Dendritic cell treated with granulocyte-macrophage colony-stimulating factor and Interleukin-4, amounts not matched to agents 40 ng/mL and 50 ng/mL, for 4 days (primary cell): ENCODE measurements at regions of chr1 and their contacts with region 1.

Region 1: GRCh38 chr1:38873027-38873969 is at the start of gene MYCBP:
- H3K4me3 Mint-ChIP-seq: peak within 1 kb of the TSS; percentile 91
- H3K27ac Mint-ChIP-seq: peak within 1 kb of the TSS; percentile 82
- H3K4me1 Mint-ChIP-seq: peaks cover 16% of the 10 kb centered on the region
- H3K27me3 Mint-ChIP-seq: no peaks in the 10 kb centered on the region

Region 2: DNA sequence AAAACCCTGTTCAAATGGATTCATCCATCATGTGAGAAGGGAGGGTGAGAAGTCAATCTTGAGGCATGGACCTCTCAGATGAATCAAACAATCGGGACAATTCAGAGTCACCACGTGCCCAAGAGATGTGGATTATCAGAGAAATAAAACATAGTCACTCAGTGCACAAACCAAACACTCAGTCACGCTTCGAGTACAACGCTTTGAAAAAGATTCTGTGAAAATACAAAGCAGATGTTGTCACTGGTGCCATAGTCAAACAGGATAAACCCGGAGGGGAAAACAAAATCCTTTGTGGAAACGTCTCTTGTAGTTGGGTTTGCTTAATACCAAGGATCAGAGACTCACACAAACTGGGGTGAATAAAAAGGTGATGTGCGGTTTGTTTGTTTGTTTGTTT is 202.1 kb before region 1 on chr1:
- intact Hi-C with region 1: no loop called
- H3K4me3 Mint-ChIP-seq: no peak overlapping the region
- H3K27ac Mint-ChIP-seq: no peak overlapping the region
- H3K4me1 Mint-ChIP-seq: no peaks in the 10 kb centered on the region
- H3K27me3 Mint-ChIP-seq: peaks cover 5% of the 10 kb centered on the region

Region 3: GRCh38 chr1:38859561-38860453 is 13.5 kb before region 1 on chr1 and contains the start of gene RRAGC:
- intact Hi-C with region 1: loop called (anchors 1 kb)
- H3K4me3 Mint-ChIP-seq: peak within 1 kb of the TSS; percentile 94
- H3K27ac Mint-ChIP-seq: peak within 1 kb of the TSS; percentile 87
- H3K4me1 Mint-ChIP-seq: peaks cover 57% of the 10 kb centered on the region
- H3K27me3 Mint-ChIP-seq: no peaks in the 10 kb centered on the region

Region 4: DNA sequence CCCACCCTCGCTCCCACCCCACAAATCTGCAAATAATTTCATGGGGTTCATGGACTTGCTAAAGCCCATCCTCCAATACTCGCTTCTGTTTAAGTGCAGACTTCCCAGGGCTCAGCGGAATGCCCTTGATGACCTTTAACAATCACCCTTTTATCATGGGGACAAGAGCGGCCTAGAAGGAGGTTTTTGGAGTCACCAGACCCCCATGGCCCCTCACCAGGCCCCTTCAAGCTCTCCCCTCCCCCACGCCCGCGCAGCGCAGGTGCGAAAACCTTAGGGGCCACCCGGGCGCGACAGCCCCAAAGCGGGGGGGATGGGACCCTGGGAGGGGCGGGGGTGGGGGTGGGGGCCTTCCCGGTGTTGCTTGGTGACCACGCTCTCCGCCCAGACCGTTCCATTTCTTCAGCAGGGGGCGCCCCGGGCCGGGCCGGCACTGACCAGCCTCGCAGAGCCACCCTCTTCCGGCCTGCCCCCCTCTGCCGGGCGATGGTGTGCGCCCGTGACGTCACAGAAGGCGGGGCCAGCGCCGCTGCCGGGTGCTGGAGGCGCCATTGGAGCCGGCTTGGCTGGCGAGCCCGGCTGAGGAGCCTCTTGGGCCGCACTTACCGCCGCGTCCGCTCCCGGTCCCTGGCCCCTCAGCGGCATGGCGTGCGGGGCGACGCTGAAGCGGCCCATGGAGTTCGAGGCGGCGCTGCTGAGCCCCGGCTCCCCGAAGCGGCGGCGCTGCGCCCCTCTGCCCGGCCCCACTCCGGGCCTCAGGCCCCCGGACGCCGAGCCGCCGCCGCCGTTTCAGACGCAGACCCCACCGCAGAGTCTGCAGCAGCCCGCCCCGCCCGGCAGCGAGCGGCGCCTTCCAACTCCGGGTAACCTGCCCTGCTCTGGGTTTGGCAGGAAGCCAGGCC is 117.7 kb after region 1 on chr1 and contains the start of gene AKIRIN1:
- intact Hi-C with region 1: loop called (anchors 1 kb)
- H3K4me3 Mint-ChIP-seq: peak within 1 kb of the TSS; percentile 80
- H3K27ac Mint-ChIP-seq: peak within 1 kb of the TSS; percentile 85
- H3K4me1 Mint-ChIP-seq: peaks cover 36% of the 10 kb centered on the region
- H3K27me3 Mint-ChIP-seq: no peaks in the 10 kb centered on the region

Region 5: DNA sequence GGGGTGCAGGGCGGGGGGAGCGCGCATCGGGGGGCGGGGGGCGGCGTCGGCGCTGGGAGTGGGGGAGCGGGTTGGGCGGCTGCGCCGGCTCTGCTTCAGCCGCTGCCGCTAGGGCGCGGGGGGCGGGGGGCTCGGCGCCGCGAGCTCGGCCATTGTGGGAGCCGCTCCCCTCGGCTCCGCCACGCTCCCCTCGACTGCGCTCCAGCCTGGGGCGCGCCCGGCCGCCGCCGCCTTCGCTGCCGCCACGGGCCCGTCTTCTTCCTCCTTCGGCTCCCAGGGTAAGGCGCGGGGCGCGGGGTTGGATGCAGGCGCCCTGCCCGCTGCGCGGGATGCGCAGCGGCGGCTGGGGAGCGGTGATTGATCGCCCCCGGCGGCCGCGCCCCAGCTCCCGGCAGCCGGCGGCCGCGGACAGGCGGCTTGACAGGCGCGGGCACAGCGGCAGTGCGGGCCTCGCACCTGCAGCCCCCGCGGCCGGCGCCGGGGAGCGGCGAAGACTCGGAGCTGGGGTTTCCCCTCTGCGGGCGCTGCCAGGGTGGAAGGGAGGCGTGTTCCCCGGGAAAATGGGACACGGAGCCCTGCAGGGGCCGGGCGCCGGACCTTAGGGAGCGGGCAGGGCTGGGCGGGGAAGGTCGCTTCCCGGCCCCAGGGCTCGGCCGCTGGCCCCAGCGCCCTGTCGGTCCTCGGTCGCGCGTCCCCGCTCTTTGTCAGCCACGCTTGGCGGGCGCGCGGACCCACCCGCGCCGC is 208.1 kb after region 1 on chr1:
- intact Hi-C with region 1: loop called (anchors 10 kb)
- H3K4me3 Mint-ChIP-seq: peak overlapping the region; percentile 35
- H3K27ac Mint-ChIP-seq: no peak overlapping the region
- H3K4me1 Mint-ChIP-seq: peaks cover 21% of the 10 kb centered on the region
- H3K27me3 Mint-ChIP-seq: peaks cover 48% of the 10 kb centered on the region

Region 6: GRCh38 chr1:39272027-39272797 is 398.9 kb after region 1 on chr1:
- intact Hi-C with region 1: no loop called
- H3K4me3 Mint-ChIP-seq: no peak overlapping the region
- H3K27ac Mint-ChIP-seq: no peak overlapping the region
- H3K4me1 Mint-ChIP-seq: peaks cover 37% of the 10 kb centered on the region
- H3K27me3 Mint-ChIP-seq: no peaks in the 10 kb centered on the region